Psoas muscle (tissue), 8 donors: ENCODE measurements at regions of chr19 and their contacts with region 1.

Region 1: GRCh38 chr19:50264483-50265186 is 61.2 kb downstream of the MYH14 start:
- DNase-seq: no peak
- ATAC-seq: peak in 1 of 4 donors; percentile 36
- H3K4me3 ChIP-seq: no peak overlapping the region
- H3K27ac ChIP-seq: no peak overlapping the region
- H3K4me1 ChIP-seq: no peaks in the 10 kb centered on the region
- H3K27me3 ChIP-seq: no peaks in the 10 kb centered on the region
- CTCF ChIP-seq: no peak

Region 2: GRCh38 chr19:50308991-50309390 is 44.4 kb after region 1 on chr19:
- intact Hi-C with region 1: loop called in 1 of 2 experiments (anchors 5 kb)
- DNase-seq: peak in 1 of 2 donors; percentile 39
- ATAC-seq: no peak
- H3K4me3 ChIP-seq: no peak overlapping the region
- H3K27ac ChIP-seq: no peak overlapping the region
- H3K4me1 ChIP-seq: no peaks in the 10 kb centered on the region
- H3K27me3 ChIP-seq: peaks cover 0 to 35% (median 11%) of the 10 kb centered on the region in 3 donors
- CTCF ChIP-seq: no peak

Region 3: DNA sequence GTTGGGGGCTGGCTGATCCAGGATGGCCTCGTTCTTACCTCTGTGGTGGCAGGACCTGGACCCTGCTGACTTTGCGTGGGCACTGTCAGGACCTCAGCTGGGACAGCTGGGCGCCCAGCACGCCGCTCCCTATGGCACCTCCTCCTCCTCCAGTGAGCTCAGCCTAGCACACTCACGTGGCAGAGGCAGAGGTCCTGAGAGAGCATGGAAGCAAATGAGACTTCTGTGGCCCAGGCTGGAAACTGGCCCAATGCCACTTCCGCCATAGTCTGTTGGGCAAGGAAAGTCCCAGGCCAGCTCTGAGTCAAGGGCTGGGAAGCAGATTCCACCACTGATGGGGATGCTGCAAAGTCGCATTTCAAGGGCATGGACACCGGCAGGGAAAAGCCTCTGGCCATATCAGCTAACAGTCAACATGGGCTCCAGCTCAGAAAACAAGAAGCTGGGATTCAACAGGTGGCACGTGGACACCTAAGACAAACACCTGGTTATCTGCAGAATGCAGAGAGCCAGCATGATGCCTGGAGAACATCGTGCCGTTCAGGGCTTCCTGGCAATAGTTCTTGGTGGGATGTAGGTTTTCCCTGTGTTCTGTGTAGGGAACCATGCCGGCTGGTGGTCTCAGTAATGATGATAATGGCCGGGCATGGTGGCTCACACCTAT is 184.7 kb after region 1 on chr19:
- intact Hi-C with region 1: no loop called
- DNase-seq: peak in 1 of 2 donors; percentile 63
- ATAC-seq: peak; percentile 52 to 78 (median 68)
- H3K4me3 ChIP-seq: no peak overlapping the region
- H3K27ac ChIP-seq: no peak overlapping the region
- H3K4me1 ChIP-seq: no peaks in the 10 kb centered on the region
- H3K27me3 ChIP-seq: no peaks in the 10 kb centered on the region
- CTCF ChIP-seq: no peak

Region 4: DNA sequence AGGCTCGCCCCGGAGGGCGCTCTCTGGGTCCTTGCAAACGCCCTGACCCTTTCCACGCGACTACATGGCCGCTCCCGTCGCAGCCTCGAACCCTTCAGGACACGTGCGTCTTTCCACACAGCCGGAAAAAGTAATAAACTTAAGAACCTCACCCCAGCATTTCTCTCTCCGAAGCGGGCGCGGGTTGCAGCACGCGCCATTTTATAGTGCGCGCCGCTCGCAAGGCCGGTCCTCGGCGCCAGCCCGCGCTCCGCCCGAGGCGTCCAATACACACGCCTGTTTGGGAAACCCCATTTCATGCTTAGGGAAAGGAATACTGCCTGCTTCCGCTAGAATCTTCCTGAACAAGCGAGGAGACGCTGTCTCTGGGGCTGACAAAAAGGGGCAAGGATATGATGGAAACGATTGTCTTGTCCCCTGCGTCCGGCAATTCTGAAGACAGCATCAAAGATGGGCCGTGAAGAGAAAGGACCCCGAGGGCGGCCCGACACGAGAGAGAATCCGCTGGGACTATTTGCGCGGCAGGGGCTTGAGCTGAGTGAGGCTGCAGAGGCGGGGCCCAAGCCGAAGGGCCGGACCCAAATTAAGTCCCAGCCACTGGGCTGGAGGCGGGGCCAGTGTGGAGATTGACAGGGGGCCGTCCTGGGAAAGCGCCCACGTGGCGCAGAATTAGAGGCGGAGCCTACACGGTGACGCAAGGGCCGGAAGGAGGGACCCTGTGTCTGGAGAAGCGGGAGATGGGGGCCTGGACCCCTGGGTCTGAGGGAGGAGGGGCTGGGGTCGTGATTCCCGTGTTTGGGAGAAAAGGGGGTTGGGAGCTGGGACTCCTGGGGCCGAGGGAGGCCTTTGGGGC is 540.0 kb after region 1 on chr19:
- intact Hi-C with region 1: no loop called
- DNase-seq: peak; percentile 99
- ATAC-seq: peak; percentile 99 to 100 (median 100)
- H3K4me3 ChIP-seq: peak overlapping the region; percentile 98
- H3K27ac ChIP-seq: peak overlapping the region; percentile 94
- H3K4me1 ChIP-seq: peaks cover 17% of the 10 kb centered on the region
- H3K27me3 ChIP-seq: no peaks in the 10 kb centered on the region
- CTCF ChIP-seq: no peak